Posterior cingulate gyrus (tissue), 11 donors: ENCODE measurements at regions of chr17 and their contacts with region 1.

Region 1: DNA sequence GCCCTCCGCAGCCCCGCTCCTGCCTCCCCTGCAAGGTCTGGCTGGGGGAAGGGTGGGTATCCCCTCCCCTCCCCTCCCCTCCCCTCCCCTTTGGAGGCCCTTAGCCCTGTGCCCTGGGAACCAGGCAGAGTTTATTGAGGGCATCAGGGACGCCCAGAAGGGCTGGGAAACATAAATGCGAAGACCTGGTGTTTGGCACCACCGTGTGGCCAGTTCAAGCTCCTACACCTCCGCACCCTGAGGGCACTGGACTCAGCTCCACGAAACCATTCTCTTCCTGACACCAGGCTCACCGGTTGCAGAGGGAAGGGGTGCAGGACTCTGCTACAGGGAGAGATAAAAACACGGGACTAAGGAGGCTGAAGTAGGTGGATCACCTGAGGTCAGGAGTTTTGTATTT is 1.0 kb upstream of the AIPL1 start:
- DNase-seq: peak; percentile 40 to 95 (median 68)

Region 2: GRCh38 chr17:5584383-5585286 is 851.3 kb before region 1 on chr17 and contains the start of gene NLRP1:
- intact Hi-C with region 1: loop called (anchors 5 kb)
- DNase-seq: peak in 8 of 10 donors; percentile 17 to 92 (median 53)

Region 3: GRCh38 chr17:6279659-6280058 is 156.3 kb before region 1 on chr17:
- intact Hi-C with region 1: no loop called
- DNase-seq: no peak

Region 4: GRCh38 chr17:6413065-6413464 is 22.9 kb before region 1 on chr17:
- intact Hi-C with region 1: no loop called
- DNase-seq: no peak